ENCODE measurements at regions of chr6 and their contacts with region 1.

Region 1: DNA sequence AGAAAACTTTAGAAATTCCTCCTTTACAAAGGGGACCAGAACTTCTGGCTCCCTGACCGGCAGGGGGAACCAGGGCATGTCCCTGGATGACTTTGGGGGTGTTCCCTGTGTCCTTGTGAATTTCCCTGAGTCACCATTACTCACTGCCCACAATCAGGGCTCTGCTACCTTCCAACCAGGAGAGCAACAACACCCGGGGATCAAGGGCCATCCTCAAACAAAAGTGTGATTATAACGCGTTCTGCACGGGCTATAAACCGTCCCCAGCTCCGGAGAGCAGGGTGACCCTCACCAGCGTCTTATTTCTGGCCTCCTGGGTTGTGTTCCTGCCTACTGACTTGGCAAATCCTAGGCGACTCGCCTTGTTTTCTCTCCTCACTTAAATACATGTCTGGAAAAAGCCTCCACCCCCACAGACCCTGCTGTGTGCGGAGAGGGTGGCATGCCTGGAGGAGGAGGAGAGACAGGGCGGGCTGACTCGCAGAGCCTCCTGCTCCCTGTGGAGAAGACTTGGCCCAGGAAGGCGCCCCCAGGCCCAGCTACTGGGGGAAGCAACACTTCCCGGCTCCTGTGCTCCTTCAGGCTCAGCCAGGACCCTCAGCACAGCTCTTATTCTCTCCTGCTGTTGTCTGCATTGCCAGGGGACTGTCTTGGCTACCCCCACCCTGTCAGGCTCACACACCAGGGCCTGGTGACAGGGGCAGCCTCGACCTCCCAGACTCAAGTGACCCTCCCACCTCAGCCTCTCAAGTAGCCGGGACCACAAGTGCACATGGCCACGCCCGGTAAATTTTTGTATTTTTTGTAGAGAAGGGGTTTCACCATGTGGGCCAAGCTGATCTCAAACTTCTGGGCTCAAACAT is 54.1 kb downstream of the FGD2 start:
- DNase-seq: peak in 7 of 10 donors; percentile 37 to 93 (median 60)

Region 2: GRCh38 chr6:36678518-36679027 is 381.0 kb before region 1 on chr6 and contains the start of gene CDKN1A:
- intact Hi-C with region 1: no loop called
- DNase-seq: peak; percentile 57 to 97 (median 80)

Region 3: DNA sequence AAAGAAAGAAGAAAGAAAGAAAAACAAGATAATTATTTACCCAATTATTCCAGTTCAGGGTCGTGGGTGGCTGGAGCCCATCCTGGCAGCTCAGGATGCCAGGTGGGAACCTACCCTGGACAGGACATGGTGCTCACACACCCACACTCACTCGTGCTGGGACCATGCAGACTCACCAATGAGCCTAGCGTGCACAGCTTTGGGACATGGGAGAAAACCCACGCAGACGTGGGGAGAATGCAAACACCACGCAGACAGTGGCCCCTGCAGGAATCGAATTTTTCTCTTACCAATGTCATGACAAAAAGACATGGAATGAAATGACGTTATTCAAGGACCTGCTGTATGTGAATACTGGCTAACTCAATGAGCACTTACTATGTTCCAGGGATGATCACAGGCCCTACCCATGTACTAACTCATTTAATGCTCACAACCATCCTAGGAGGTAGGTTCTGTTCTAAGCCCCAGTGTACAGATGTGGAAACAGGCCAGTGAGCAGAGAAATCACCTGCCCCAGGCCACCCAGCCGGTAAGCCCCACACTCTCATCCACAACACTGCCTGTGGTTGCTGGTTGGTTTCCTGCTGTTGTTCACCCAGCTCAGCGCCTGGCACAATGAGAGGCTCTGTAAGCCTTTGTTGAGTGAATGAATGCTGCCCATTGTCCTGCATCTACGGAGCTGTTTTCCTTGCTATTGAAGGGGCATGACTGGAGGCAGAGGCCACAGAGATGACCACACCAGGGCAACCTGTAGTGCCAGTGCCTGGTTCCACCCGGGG is 111.8 kb before region 1 on chr6:
- intact Hi-C with region 1: no loop called
- DNase-seq: peak in 9 of 10 donors; percentile 54 to 96 (median 75)

Region 4: DNA sequence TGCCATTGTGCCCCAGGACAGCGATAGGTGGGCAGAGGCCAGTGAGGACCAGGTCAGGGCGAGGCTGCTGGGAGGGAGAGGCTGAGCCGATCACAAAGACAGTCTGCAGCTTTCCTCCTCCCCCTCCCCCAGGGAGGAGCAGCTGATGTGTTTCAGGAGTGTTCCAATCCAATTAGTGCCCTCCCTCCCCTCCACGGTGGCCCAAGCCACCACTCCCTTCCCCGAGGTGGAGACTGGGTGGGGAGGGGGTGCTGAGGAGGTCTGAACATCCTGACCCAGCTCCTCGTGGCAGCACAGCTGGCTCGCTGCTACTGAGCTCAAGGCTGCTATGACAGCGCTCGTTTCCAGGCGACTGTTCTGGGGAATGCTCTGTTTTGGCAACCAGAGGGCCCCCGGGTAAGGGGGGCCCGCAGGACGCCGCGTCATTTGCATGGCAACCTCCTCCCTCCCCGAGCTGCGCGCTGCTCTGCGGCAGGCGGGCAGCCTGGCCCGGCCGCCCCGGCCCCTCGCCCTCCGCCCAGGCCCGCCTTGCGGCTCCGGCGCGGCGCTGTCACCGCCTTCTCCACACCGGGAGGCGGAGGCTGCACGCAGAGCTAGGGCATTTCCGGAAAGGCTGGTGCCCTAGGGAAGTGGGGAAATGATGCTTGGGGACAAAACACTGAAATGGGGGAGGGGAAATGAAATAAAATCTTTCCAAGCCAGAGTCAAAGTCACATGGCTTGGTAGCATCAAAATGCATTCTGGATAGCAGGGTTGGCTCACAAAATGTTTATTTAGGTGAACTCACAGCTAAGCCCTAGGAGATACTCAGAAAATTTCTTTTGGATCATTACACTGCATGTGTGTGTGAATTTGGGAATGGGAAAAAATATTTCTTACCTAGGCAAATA is 42.9 kb after region 1 on chr6:
- intact Hi-C with region 1: loop called (anchors 5 kb)
- DNase-seq: peak; percentile 77 to 98 (median 88)

Measured in posterior cingulate gyrus (tissue), 11 donors.